OCI-LY7 (cell line): ENCODE measurements at regions of chr11 and their contacts with region 1.

Region 1: DNA sequence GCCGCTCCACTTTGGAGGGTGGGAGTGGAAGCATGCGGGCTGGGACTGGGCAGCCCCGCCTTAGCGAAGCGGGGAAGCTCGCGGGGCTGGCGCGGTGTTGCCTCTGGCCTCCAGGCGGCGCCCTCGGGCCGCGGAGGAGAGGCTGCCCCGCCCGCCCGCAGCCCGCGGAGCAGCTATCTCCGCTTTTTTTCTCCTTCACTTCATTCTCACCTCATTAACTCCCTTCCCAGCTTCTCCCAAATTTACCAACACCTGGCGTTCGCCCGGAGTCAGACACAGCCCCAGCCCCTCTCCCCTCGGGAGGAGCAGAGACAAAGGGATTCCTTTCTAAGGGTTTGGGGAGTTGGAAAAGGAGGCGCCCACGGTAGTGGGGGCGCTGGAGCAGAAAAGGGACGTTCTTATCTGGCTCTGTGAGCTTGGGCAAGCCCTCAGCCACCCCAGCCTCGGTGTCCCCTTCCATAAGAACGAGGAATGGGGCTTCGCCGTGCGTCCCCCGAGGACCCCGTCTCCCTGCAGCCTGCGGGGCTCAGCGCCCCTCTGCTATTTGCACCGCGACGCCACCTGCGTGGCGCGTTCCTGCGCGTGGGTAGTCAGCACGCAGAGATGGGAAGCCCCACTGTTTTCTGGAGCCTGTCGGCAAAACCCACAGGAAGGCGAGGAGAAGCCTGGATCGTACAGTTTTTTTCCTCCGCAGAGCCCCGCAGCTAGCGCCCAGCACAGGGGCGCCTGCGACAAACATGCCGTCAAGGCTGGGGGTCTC is 1.5 kb upstream of the WNT11 start:
- DNase-seq: peak; percentile 75
- H3K4me3 ChIP-seq: peak overlapping the region; percentile 56
- H3K27ac ChIP-seq: no peak overlapping the region
- H3K4me1 ChIP-seq: no peaks in the 10 kb centered on the region
- CTCF ChIP-seq: peak; percentile 90

Region 2: DNA sequence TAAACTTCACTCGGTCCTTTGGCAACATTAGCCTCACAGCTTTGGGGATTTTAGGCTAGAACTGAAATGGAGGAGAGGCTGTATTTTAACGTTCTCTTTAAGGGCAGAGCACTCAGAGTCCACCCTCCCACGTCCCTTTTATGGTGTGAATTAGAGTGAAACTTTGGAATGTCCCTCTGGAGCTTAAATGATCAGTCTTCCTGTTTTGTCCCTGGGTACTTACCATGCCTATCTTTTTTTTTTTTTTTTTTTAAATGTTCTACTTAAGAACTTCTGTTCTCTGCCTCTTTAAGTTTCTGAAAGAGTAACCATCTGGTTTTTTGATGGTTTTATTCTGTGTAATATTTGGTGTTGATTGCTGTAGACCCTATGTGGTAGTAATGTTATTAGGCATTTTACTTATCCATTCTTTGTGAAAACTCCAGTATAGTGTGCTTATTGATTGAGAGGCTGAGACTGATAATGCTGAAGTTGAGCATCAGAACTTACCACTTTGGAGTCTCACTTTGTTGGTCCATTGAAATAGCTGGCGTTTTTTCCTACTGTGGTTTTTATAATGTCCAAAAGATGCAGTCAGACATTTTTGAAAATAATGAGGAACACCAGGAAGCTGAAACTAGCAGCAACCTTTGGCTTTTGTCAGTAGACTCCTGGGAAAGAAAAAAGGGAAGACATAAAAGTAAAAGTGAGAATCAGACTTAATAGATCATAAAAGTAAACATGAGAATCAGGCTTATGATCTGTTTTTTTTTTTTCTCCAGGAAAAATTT is 381.2 kb before region 1 on chr11:
- CTCF ChIA-PET with region 1: no interaction called
- POLR2A ChIA-PET with region 1: no interaction called
- intact Hi-C with region 1: no loop called
- DNase-seq: no peak
- H3K4me3 ChIP-seq: no peak overlapping the region
- H3K27ac ChIP-seq: peak overlapping the region; percentile 99
- H3K4me1 ChIP-seq: peaks cover 52% of the 10 kb centered on the region
- CTCF ChIP-seq: no peak

Region 3: DNA sequence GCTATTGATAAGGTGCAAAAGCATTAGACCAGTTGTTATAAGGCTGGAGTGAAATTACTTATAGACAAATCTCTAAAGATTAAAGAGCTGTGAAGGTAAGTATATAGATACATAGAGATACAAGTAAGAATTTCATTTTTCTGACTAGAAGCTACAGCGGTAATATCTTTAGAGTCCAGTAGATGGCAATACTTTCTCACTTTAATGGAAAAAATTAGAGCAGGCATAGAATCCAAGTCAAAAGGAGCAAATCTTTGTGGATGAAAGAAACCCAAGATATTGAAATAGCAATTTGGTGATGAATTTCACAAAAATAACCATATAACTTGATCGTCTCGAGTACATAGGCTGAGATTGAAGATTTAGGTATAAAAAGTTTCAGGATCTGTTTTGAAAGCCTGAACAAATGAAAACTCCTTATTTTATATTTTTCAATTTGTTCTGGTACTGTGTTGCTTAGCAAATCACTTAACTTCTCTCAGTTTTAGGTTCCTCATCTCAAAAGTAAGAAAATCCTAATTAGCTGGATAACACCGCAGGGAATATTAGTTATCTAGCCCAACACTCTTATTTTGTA is 310.9 kb before region 1 on chr11:
- CTCF ChIA-PET with region 1: interaction called, 3 read pairs
- POLR2A ChIA-PET with region 1: no interaction called
- intact Hi-C with region 1: loop called (anchors 5 kb)
- DNase-seq: peak; percentile 57
- H3K4me3 ChIP-seq: no peak overlapping the region
- H3K27ac ChIP-seq: no peak overlapping the region
- H3K4me1 ChIP-seq: peaks cover 9% of the 10 kb centered on the region
- CTCF ChIP-seq: peak; percentile 92

Region 4: GRCh38 chr11:76318744-76319384 is 111.0 kb after region 1 on chr11:
- CTCF ChIA-PET with region 1: interaction called, 14 read pairs
- POLR2A ChIA-PET with region 1: no interaction called
- intact Hi-C with region 1: loop called (anchors 1 kb)
- DNase-seq: peak; percentile 83
- H3K4me3 ChIP-seq: no peak overlapping the region
- H3K27ac ChIP-seq: no peak overlapping the region
- H3K4me1 ChIP-seq: no peaks in the 10 kb centered on the region
- CTCF ChIP-seq: peak; percentile 92

Region 5: DNA sequence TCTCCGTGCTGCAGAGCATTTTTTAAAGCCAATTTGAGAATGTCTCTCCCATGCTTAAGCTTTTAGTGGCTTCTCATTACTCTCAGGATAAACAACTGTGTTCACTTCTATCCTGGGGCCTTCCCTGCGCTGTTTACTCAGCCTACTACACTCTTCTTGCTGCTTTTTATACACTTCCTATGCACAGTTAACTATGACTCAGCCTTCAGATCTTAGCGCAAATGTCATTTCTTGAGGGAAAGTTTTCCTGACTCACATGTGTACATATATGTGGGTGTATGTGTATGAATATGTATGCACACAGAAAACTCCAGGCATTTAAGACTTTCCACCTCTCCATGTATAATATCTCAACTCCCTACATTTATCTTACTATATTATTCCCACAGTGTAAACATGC is 163.3 kb after region 1 on chr11:
- CTCF ChIA-PET with region 1: no interaction called
- POLR2A ChIA-PET with region 1: no interaction called
- intact Hi-C with region 1: no loop called
- DNase-seq: no peak
- H3K4me3 ChIP-seq: no peak overlapping the region
- H3K27ac ChIP-seq: no peak overlapping the region
- H3K4me1 ChIP-seq: peaks cover 18% of the 10 kb centered on the region
- CTCF ChIP-seq: no peak